Right lobe of liver (tissue), 6 donors: ENCODE measurements at regions of chr12 and their contacts with region 1.

Region 1: GRCh38 chr12:114508529-114509129 is 102.7 kb upstream of the TBX5 start:
- DNase-seq: peak in 2 of 3 donors; percentile 42 to 70
- ATAC-seq: peak; percentile 83 to 91 (median 90)
- H3K4me3 ChIP-seq: no peak overlapping the region
- H3K27ac ChIP-seq: no peak overlapping the region
- H3K4me1 ChIP-seq: no peaks in the 10 kb centered on the region
- H3K27me3 ChIP-seq: no peaks in the 10 kb centered on the region
- CTCF ChIP-seq: peak; percentile 69 to 83 (median 76)
- POLR2A ChIP-seq: no peak

Region 2: GRCh38 chr12:113980537-113981337 is 527.9 kb before region 1 on chr12:
- intact Hi-C with region 1: loop called (anchors 5 to 10 kb)
- DNase-seq: peak in 1 of 3 donors; percentile 52
- ATAC-seq: peak; percentile 88 to 96 (median 90)
- H3K4me3 ChIP-seq: no peak overlapping the region
- H3K27ac ChIP-seq: no peak overlapping the region
- H3K4me1 ChIP-seq: no peaks in the 10 kb centered on the region
- H3K27me3 ChIP-seq: no peaks in the 10 kb centered on the region
- CTCF ChIP-seq: peak; percentile 89 to 96 (median 94)
- POLR2A ChIP-seq: no peak

Region 3: DNA sequence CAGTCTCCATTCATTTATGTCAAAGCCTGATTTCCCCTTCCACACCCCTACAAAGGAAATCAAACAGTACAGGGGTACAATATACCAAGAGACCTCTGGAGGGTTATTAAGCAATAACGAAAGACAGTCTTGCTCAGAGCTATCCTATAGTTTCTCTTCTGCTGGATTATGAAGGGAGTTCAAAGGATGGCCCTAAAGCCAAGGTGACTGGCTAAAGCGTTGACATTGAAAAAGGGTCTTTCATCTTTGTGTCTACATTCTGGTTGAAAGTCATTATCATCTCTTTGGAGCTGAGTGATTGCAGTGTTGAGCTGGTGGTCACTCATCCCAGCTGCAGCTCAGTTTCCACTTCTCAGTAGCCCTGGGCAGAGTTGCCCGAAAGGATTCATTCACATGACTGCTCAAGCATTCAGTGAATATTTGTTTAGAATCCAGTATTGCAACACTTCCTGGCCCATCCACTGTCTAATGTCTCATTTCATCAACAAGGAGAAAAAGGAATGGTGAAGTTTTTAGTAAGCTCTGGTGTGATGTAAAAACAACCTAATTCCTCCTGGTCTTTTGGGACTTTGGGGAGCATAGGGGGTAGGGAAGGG is 83.5 kb before region 1 on chr12:
- intact Hi-C with region 1: no loop called
- DNase-seq: no peak
- ATAC-seq: peak in 1 of 4 donors; percentile 41
- H3K4me3 ChIP-seq: no peak overlapping the region
- H3K27ac ChIP-seq: no peak overlapping the region
- H3K4me1 ChIP-seq: no peaks in the 10 kb centered on the region
- H3K27me3 ChIP-seq: no peaks in the 10 kb centered on the region
- CTCF ChIP-seq: no peak
- POLR2A ChIP-seq: no peak

Region 4: GRCh38 chr12:114562654-114563053 is 54.0 kb after region 1 on chr12:
- intact Hi-C with region 1: no loop called
- DNase-seq: no peak
- ATAC-seq: no peak
- H3K4me3 ChIP-seq: no peak overlapping the region
- H3K27ac ChIP-seq: no peak overlapping the region
- H3K4me1 ChIP-seq: no peaks in the 10 kb centered on the region
- H3K27me3 ChIP-seq: no peaks in the 10 kb centered on the region
- CTCF ChIP-seq: no peak
- POLR2A ChIP-seq: no peak

Region 5: GRCh38 chr12:114580306-114580705 is 71.7 kb after region 1 on chr12:
- intact Hi-C with region 1: no loop called
- DNase-seq: no peak
- ATAC-seq: peak in 3 of 4 donors; percentile 18 to 79 (median 48)
- H3K4me3 ChIP-seq: no peak overlapping the region
- H3K27ac ChIP-seq: peak overlapping the region in 1 of 3 donors; percentile 29
- H3K4me1 ChIP-seq: peaks cover 0 to 11% (median 0%) of the 10 kb centered on the region in 4 donors
- H3K27me3 ChIP-seq: no peaks in the 10 kb centered on the region
- CTCF ChIP-seq: no peak
- POLR2A ChIP-seq: no peak

Region 6: DNA sequence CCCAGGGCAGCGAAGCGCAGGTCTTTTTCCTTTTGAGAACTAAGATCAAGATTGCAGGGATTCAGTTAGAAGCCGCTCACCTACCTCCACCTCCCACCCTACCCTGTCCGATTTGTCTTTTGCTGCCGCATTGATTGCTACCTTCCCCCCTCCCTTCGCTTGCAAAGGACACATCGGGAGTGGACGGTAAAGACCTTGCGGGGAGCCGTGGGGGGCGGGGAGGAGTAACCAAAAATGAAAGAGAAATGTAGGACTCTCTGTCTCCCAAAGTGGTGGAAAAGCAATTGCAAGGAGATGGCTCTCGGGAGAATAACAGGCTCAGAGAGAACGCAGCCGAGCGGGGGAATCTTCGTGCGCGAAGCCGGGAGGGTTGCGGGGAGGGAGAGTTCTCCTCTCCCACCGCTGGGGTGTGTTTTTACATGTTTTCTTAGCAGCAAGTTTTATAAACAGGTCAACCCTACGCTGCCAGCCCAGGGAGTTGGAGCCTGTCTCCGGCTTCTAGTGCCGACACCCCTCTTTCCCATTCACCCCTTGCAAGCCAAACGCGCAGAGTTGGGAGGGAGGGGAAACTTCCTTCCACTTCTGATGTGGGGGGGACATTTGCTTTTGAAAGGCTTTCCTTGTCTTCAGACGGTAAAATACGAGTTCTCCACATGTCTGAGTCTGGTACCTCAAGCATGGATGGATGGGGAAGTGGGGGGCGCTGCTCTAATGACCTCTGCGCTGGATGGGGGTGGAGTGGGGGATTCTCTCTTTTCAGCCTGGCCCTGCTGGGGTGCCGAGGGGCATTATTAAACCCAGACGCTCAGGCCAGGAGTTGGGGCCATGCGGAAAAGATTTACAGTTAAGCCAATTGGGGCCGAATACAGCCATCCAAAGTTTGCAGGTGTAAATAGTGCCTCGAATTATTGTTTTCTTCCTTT is 184.2 kb after region 1 on chr12:
- intact Hi-C with region 1: no loop called
- DNase-seq: no peak
- ATAC-seq: peak; percentile 52 to 65 (median 57)
- H3K4me3 ChIP-seq: peak overlapping the region; percentile 25 to 58 (median 52)
- H3K27ac ChIP-seq: peak overlapping the region in 2 of 3 donors; percentile 34 to 70
- H3K4me1 ChIP-seq: no peaks in the 10 kb centered on the region
- H3K27me3 ChIP-seq: no peaks in the 10 kb centered on the region
- CTCF ChIP-seq: no peak
- POLR2A ChIP-seq: no peak